Endothelial cell of umbilical vein (primary cell): ENCODE measurements at regions of chr6 and their contacts with region 1.

Region 1: GRCh38 chr6:21109391-21110178 is 484.0 kb upstream of the SOX4 start:
- DNase-seq: peak; percentile 94
- H3K4me3 ChIP-seq: peak overlapping the region in 1 of 3 experiments; percentile 62
- H3K27ac ChIP-seq: peak overlapping the region; percentile 99
- H3K4me1 ChIP-seq: peaks cover 37% of the 10 kb centered on the region
- H3K27me3 ChIP-seq: no peaks in the 10 kb centered on the region
- CTCF ChIP-seq: no peak
- POLR2A ChIP-seq: no peak

Region 2: DNA sequence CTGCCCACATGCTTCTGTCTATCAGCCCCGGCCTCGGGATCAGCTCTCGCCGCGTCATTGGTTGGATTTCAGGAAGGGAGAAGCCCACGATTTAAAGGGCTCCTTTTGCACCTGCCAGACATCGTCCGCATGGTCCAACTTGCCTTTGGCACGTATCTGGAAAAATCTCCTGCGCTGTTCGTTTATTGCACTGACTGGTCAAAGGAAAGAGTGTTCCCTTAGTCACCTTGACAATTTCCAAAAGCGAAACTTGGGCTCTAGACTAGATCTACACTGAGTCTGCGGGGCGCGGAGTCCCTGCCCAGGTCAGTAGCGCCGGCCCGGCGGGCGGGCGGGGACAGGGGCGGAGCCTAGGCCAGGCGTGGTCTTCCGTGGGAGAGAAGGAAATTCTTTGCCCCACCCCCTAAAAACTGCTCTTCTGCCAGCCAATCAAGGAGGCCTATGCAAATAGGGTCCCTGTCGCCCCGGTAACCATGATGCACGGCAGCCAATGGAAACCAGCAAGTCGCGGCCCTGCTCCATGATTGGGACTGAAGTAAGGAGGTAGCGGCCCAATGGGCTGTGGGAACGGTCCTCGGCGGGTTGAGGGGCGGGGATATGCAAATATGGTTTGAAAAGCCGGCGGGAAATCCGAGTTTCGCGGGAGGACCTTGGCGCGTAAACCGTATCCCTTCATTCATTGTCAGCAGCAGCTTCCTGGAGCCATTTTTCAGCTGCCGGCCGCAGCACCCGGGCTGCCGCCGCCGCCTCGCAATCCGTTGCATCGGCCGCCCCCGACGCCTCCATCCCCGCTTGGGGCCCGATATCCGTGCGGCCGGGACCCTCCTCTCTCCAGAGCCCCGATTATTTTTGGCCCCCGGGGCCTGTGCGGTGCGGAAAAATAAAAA is 708.1 kb before region 1 on chr6 and contains the start of gene E2F3:
- CTCF ChIA-PET with region 1: no interaction called
- POLR2A ChIA-PET with region 1: no interaction called
- dilution Hi-C with region 1: no loop called
- intact Hi-C with region 1: loop called (anchors 5 kb)
- DNase-seq: peak; percentile 100
- H3K4me3 ChIP-seq: peak within 1 kb of the TSS; percentile 69 to 78 (median 72)
- H3K27ac ChIP-seq: peak within 1 kb of the TSS; percentile 56
- H3K4me1 ChIP-seq: peaks cover 7% of the 10 kb centered on the region
- H3K27me3 ChIP-seq: no peaks in the 10 kb centered on the region
- CTCF ChIP-seq: no peak
- POLR2A ChIP-seq: peak; percentile 52
- total RNA-seq, gene E2F3: 21.2 and 22.0 TPM in 2 replicates

Region 3: DNA sequence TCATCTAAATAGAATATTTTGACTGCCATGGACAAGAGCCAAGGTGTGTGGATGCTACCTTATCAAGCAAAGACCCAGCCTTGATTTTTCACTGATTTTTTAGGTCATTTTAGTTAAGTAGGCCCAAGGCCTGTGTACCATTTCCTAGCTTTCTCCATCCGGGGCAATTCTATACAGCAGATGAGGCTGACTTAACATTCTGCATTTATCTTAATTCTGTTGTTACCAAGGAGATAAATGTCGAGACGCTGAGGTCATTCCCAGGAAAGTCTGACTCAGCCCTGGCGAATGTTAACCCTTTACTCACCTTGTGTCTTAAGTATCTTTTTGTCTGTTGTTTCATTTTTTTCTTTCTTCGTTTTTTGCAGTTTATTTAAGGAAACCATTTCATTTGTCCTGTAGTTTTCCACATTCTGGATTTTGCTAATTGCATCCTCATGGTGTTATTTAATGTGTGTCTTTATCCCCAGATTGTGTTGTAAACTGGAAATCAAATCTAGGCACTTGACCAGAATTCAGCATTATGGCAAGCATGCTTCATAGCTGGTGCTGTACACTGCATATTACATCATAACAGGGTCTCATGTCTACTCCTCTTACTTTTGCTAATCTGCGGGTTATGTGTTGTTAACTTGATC is 298.4 kb before region 1 on chr6:
- CTCF ChIA-PET with region 1: no interaction called
- POLR2A ChIA-PET with region 1: no interaction called
- dilution Hi-C with region 1: no loop called
- intact Hi-C with region 1: loop called (anchors 2 kb)
- DNase-seq: peak; percentile 95
- H3K4me3 ChIP-seq: no peak overlapping the region
- H3K27ac ChIP-seq: peak overlapping the region; percentile 95
- H3K4me1 ChIP-seq: peaks cover 12% of the 10 kb centered on the region
- H3K27me3 ChIP-seq: no peaks in the 10 kb centered on the region
- CTCF ChIP-seq: no peak
- POLR2A ChIP-seq: no peak

Region 4: GRCh38 chr6:20952699-20953474 is 156.7 kb before region 1 on chr6:
- CTCF ChIA-PET with region 1: no interaction called
- POLR2A ChIA-PET with region 1: no interaction called
- dilution Hi-C with region 1: no loop called
- intact Hi-C with region 1: loop called (anchors 1 kb)
- DNase-seq: peak; percentile 95
- H3K4me3 ChIP-seq: peak overlapping the region in 1 of 3 experiments; percentile 55
- H3K27ac ChIP-seq: peak overlapping the region; percentile 94
- H3K4me1 ChIP-seq: peaks cover 14% of the 10 kb centered on the region
- H3K27me3 ChIP-seq: no peaks in the 10 kb centered on the region
- CTCF ChIP-seq: peak; percentile 26 to 50
- POLR2A ChIP-seq: no peak

Region 5: GRCh38 chr6:21003780-21004541 is 105.6 kb before region 1 on chr6:
- CTCF ChIA-PET with region 1: no interaction called
- POLR2A ChIA-PET with region 1: no interaction called
- dilution Hi-C with region 1: no loop called
- intact Hi-C with region 1: loop called (anchors 1 kb)
- DNase-seq: peak; percentile 93
- H3K4me3 ChIP-seq: peak overlapping the region in 1 of 3 experiments; percentile 29
- H3K27ac ChIP-seq: peak overlapping the region; percentile 96
- H3K4me1 ChIP-seq: peaks cover 34% of the 10 kb centered on the region
- H3K27me3 ChIP-seq: no peaks in the 10 kb centered on the region
- CTCF ChIP-seq: no peak
- POLR2A ChIP-seq: no peak

Region 6: DNA sequence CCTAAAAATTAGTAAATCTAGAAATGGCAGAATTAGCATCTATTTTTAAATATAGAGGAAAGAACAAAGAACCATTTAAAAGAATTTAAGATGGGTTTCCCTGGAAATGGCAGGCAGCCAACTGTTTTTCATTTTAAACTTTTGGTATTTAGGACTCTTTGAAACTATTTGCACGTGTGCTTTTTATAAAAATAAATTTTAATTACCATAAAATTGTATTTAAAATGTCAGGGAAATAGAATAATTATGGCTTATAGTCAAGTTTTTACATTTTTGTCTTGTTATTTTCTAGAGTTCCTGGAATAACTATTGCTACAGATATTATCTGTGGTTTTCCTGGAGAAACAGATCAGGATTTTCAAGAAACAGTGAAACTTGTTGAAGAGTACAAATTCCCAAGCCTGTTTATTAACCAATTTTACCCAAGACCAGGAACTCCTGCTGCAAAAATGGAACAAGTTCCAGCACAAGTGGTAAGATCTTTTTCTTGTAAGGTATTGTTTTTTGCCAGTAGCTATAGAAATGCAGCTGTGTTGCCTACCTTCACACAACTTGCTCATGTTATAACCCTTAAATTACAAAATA is 44.7 kb before region 1 on chr6:
- CTCF ChIA-PET with region 1: no interaction called
- POLR2A ChIA-PET with region 1: no interaction called
- dilution Hi-C with region 1: no loop called
- intact Hi-C with region 1: loop called (anchors 2 kb)
- DNase-seq: peak; percentile 66
- H3K4me3 ChIP-seq: no peak overlapping the region
- H3K27ac ChIP-seq: no peak overlapping the region
- H3K4me1 ChIP-seq: peaks cover 21% of the 10 kb centered on the region
- H3K27me3 ChIP-seq: no peaks in the 10 kb centered on the region
- CTCF ChIP-seq: no peak
- POLR2A ChIP-seq: no peak

Region 7: GRCh38 chr6:21587179-21587924 is 477.8 kb after region 1 on chr6:
- CTCF ChIA-PET with region 1: no interaction called
- POLR2A ChIA-PET with region 1: no interaction called
- dilution Hi-C with region 1: no loop called
- intact Hi-C with region 1: loop called (anchors 1 kb)
- DNase-seq: peak; percentile 78
- H3K4me3 ChIP-seq: peak overlapping the region; percentile 33 to 65 (median 46)
- H3K27ac ChIP-seq: peak overlapping the region; percentile 71
- H3K4me1 ChIP-seq: peaks cover 17% of the 10 kb centered on the region
- H3K27me3 ChIP-seq: no peaks in the 10 kb centered on the region
- CTCF ChIP-seq: peak in 1 of 2 donors; percentile 50
- POLR2A ChIP-seq: no peak